MCF 10A (cell line): ENCODE measurements at regions of chr1 and their contacts with region 1.

Region 1: GRCh38 chr1:151993654-151994496 is at the start of gene S100A10:
- DNase-seq: peak; percentile 86
- H3K4me3 Mint-ChIP-seq: peak within 1 kb of the TSS; percentile 89
- H3K27ac Mint-ChIP-seq: peak within 1 kb of the TSS; percentile 96
- H3K4me1 Mint-ChIP-seq: peaks cover 54% of the 10 kb centered on the region
- H3K27me3 Mint-ChIP-seq: no peaks in the 10 kb centered on the region
- CTCF ChIP-seq: no peak
- total RNA-seq, gene S100A10: 1,693 and 1,694 TPM in 2 replicates

Region 2: DNA sequence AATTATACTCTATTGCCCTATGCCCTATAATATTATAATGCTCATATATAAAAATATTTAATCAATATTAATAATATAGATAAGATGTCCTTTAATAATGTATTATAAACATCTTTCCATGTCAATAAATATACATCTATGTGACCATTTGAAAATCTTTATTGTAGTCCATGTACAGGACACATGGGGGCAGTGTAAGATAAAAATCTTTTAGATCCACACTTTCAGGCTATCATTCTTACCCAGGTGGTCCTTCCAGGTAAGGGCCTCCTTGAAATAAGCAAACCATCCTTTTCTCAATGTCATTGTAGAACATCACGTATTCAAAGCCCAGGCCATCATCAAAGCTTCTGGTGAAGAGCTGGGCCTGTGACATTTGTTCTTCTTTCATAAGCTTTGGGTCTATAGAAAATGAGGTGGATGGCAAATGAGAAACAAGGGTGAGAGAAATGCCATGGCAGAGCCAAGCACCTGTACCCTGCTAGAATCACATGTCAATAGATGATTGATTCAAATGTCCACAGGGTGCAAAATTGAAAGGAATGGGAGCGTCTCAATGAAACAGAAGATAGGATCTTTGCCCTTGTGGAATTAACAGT is 104.8 kb before region 1 on chr1:
- CTCF ChIA-PET with region 1: interaction called, 60 read pairs
- POLR2A ChIA-PET with region 1: interaction called, 9 read pairs
- intact Hi-C with region 1: loop called (anchors 1 kb)
- DNase-seq: peak; percentile 42
- H3K4me3 Mint-ChIP-seq: no peak overlapping the region
- H3K27ac Mint-ChIP-seq: no peak overlapping the region
- H3K4me1 Mint-ChIP-seq: peaks cover 30% of the 10 kb centered on the region
- H3K27me3 Mint-ChIP-seq: no peaks in the 10 kb centered on the region
- CTCF ChIP-seq: peak; percentile 53

Region 3: GRCh38 chr1:151939779-151940178 is 54.1 kb before region 1 on chr1:
- CTCF ChIA-PET with region 1: interaction called, 350 read pairs
- POLR2A ChIA-PET with region 1: interaction called, 453 read pairs
- intact Hi-C with region 1: loop called (anchors 1 kb)
- DNase-seq: no peak
- H3K4me3 Mint-ChIP-seq: no peak overlapping the region
- H3K27ac Mint-ChIP-seq: no peak overlapping the region
- H3K4me1 Mint-ChIP-seq: peaks cover 13% of the 10 kb centered on the region
- H3K27me3 Mint-ChIP-seq: no peaks in the 10 kb centered on the region
- CTCF ChIP-seq: no peak

Region 4: GRCh38 chr1:151976858-151977257 is 17.0 kb before region 1 on chr1:
- CTCF ChIA-PET with region 1: interaction called, 543 read pairs
- POLR2A ChIA-PET with region 1: interaction called, 1,089 read pairs
- intact Hi-C with region 1: no loop called
- DNase-seq: peak; percentile 82
- H3K4me3 Mint-ChIP-seq: no peak overlapping the region
- H3K27ac Mint-ChIP-seq: peak overlapping the region; percentile 62
- H3K4me1 Mint-ChIP-seq: peaks cover 71% of the 10 kb centered on the region
- H3K27me3 Mint-ChIP-seq: no peaks in the 10 kb centered on the region
- CTCF ChIP-seq: no peak

Region 5: GRCh38 chr1:152127670-152128069 is 133.8 kb after region 1 on chr1:
- CTCF ChIA-PET with region 1: no interaction called
- POLR2A ChIA-PET with region 1: no interaction called
- intact Hi-C with region 1: no loop called
- DNase-seq: no peak
- H3K4me3 Mint-ChIP-seq: no peak overlapping the region
- H3K27ac Mint-ChIP-seq: no peak overlapping the region
- H3K4me1 Mint-ChIP-seq: no peaks in the 10 kb centered on the region
- H3K27me3 Mint-ChIP-seq: no peaks in the 10 kb centered on the region
- CTCF ChIP-seq: no peak

Region 6: GRCh38 chr1:152182431-152182830 is 188.6 kb after region 1 on chr1:
- CTCF ChIA-PET with region 1: no interaction called
- POLR2A ChIA-PET with region 1: interaction called, 11 read pairs
- intact Hi-C with region 1: no loop called
- DNase-seq: peak; percentile 80
- H3K4me3 Mint-ChIP-seq: no peak overlapping the region
- H3K27ac Mint-ChIP-seq: peak overlapping the region; percentile 82
- H3K4me1 Mint-ChIP-seq: peaks cover 64% of the 10 kb centered on the region
- H3K27me3 Mint-ChIP-seq: no peaks in the 10 kb centered on the region
- CTCF ChIP-seq: peak; percentile 94